Right cardiac atrium (tissue), 5 donors: ENCODE measurements at regions of chr18 and their contacts with region 1.

Region 1: DNA sequence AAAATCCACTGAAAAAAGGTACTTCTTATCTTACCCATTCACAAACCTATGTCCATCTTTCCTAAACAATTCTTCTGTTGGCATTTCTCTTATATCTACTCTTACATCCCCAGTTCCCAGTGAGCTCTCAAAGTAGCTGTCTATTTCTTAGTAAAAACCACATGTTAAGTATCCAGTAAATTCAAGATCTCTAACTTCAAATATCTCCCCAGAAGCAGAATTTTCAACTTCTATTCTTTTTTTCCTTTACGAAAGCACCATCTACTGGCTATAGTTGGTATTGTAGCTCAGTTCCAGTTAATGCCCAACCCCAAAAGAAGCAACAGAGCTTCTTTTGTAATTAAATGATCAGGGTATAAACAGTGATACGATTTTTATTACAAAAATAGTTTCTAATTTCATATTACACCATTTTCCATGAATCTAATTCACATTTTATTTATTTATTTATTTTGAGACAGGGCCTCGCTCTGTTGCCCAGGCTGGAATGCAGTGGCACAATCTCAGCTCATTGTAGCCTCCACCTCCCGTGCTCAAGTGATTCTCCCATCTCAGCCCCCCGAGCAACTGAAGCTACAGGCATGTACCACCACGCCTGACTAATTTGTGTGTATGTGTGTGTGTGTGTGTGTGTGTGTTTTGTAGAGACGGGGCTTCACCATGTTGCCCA is 28.5 kb downstream of the HRH4 start:
- DNase-seq: no peak
- ATAC-seq: peak in 1 of 2 donors; percentile 45
- H3K4me3 ChIP-seq: no peak overlapping the region
- H3K27ac ChIP-seq: no peak overlapping the region
- H3K4me1 ChIP-seq: no peaks in the 10 kb centered on the region
- H3K27me3 ChIP-seq: no peaks in the 10 kb centered on the region

Region 2: DNA sequence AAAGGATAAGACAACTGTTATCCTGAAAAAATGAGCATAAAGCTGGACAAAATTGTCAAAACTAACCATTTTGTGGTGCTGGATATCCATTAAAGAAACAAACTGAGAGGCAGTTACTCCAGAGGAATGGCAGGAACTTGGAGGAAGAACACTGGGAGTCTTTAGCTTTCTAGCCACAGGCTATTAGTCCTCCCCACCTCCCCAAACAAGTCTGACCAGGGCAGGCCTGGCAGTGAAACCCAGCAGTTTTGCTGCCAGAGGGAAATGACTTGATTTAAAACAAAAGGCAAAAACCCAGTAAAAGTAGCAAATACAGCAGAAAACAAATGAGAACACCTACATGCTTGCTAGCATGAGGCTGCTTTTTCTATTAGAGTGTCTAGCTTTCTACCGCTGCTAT is 126.2 kb before region 1 on chr18:
- intact Hi-C with region 1: loop called in 3 of 4 experiments (anchors 2 to 10 kb)
- DNase-seq: no peak
- ATAC-seq: no peak
- H3K4me3 ChIP-seq: no peak overlapping the region
- H3K27ac ChIP-seq: no peak overlapping the region
- H3K4me1 ChIP-seq: no peaks in the 10 kb centered on the region
- H3K27me3 ChIP-seq: no peaks in the 10 kb centered on the region

Region 3: GRCh38 chr18:24368749-24369148 is 120.2 kb before region 1 on chr18:
- intact Hi-C with region 1: loop called in 2 of 4 experiments (anchors 5 to 10 kb)
- DNase-seq: no peak
- ATAC-seq: no peak
- H3K4me3 ChIP-seq: no peak overlapping the region
- H3K27ac ChIP-seq: no peak overlapping the region
- H3K4me1 ChIP-seq: no peaks in the 10 kb centered on the region
- H3K27me3 ChIP-seq: no peaks in the 10 kb centered on the region

Region 4: DNA sequence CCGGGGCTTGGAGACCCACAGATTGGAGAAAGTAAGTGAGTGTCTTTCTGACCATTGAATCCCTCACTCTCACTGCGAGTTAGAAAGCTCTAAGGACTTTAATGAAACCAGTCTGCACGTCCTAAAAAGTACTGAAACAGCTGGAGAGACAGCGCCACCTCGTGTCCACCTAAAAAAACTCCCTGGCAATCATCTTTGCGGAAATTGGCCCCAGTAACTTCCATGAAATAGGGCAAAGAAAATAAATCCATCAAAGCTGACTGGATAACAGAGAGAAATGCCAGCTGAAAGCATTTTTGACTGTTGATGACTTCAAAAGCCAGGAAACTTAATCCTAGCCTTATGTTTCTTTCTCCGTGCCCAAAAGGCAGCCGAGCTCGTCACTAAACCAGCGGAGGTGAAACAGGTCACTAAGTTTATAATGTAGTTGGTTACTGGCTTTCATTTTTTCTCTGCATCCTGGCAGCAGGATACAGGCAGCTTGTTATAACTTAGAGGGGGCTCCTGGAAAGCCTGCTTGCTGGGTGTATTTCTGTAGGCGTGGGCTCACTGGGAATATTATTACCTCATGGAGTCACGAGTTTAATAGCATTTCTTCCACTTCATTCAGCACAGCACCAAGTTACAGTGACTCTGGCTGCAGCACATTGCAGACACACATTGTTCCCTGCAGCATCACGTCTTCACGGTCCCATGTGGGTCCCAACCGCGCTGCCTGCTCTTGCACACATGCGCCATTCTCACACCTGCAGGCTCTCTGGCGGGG is 238.0 kb after region 1 on chr18:
- intact Hi-C with region 1: loop called (anchors 5 to 10 kb)
- DNase-seq: peak; percentile 60 to 75 (median 66)
- ATAC-seq: peak; percentile 76 to 83
- H3K4me3 ChIP-seq: peak overlapping the region; percentile 2
- H3K27ac ChIP-seq: no peak overlapping the region
- H3K4me1 ChIP-seq: no peaks in the 10 kb centered on the region
- H3K27me3 ChIP-seq: no peaks in the 10 kb centered on the region